Naive thymus-derived CD4-positive, alpha-beta T cell (primary cell): ENCODE measurements at regions of chr3 and their contacts with region 1.

Region 1: GRCh38 chr3:177944228-177944661 is 592.0 kb upstream of the KCNMB2 start:
- DNase-seq: peak in 7 of 9 donors; percentile 43 to 76 (median 69)
- ATAC-seq: peak; percentile 81
- H3K4me3 ChIP-seq: no peak overlapping the region
- H3K4me3 Mint-ChIP-seq: peak overlapping the region; percentile 3 to 83 (median 58)
- H3K27ac ChIP-seq: peak overlapping the region; percentile 55
- H3K27ac Mint-ChIP-seq: peak overlapping the region; percentile 4 to 92 (median 86)
- H3K4me1 ChIP-seq: peaks cover 19 to 29% of the 10 kb centered on the region in 2 donors
- H3K4me1 Mint-ChIP-seq: peaks cover 20 to 47% (median 38%) of the 10 kb centered on the region in 7 donors
- H3K27me3 ChIP-seq: no peaks in the 10 kb centered on the region
- H3K27me3 Mint-ChIP-seq: no peaks in the 10 kb centered on the region

Region 2: GRCh38 chr3:178001670-178002101 is 57.4 kb after region 1 on chr3:
- CTCF ChIA-PET with region 1: no interaction called
- POLR2A ChIA-PET with region 1: interaction called, 3 read pairs
- intact Hi-C with region 1: loop called in 1 of 2 experiments (anchors 5 kb)
- DNase-seq: peak in 7 of 9 donors; percentile 19 to 51 (median 41)
- ATAC-seq: peak; percentile 79
- H3K4me3 ChIP-seq: peak overlapping the region; percentile 0
- H3K4me3 Mint-ChIP-seq: peak overlapping the region; percentile 58 to 83 (median 72)
- H3K27ac ChIP-seq: peak overlapping the region; percentile 55
- H3K27ac Mint-ChIP-seq: peak overlapping the region; percentile 81 to 95 (median 84)
- H3K4me1 ChIP-seq: peaks cover 12 to 43% of the 10 kb centered on the region in 2 donors
- H3K4me1 Mint-ChIP-seq: peaks cover 45 to 69% (median 66%) of the 10 kb centered on the region in 7 donors
- H3K27me3 ChIP-seq: no peaks in the 10 kb centered on the region
- H3K27me3 Mint-ChIP-seq: no peaks in the 10 kb centered on the region

Region 3: DNA sequence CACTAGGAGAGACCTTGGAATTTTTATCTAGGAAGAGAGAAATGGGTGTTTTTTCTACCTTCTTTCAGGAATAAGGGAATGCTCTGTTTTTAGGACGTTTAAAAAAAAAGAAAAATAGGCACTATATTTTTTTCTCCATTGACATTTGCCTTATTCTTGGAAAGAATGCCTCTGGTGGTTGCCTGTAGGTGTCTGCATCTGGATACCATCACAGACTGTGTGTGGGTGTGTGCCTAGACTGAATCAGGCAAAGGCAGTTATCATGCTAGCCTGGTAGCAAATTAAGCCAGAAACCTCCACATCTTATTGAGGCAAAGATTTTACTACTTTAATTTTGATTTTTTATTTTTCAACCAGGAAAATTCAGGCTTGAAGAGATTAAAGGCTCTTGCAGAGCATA is 78.4 kb after region 1 on chr3:
- CTCF ChIA-PET with region 1: no interaction called
- POLR2A ChIA-PET with region 1: no interaction called
- intact Hi-C with region 1: loop called in 1 of 2 experiments (anchors 5 kb)
- DNase-seq: no peak
- ATAC-seq: no peak
- H3K4me3 ChIP-seq: no peak overlapping the region
- H3K4me3 Mint-ChIP-seq: no peak overlapping the region
- H3K27ac ChIP-seq: no peak overlapping the region
- H3K27ac Mint-ChIP-seq: peak overlapping the region in 1 of 9 donors; percentile 60
- H3K4me1 ChIP-seq: no peaks in the 10 kb centered on the region
- H3K4me1 Mint-ChIP-seq: peaks cover 0 to 4% (median 0%) of the 10 kb centered on the region in 7 donors
- H3K27me3 ChIP-seq: no peaks in the 10 kb centered on the region
- H3K27me3 Mint-ChIP-seq: no peaks in the 10 kb centered on the region

Region 4: GRCh38 chr3:178169421-178169820 is 225.2 kb after region 1 on chr3:
- CTCF ChIA-PET with region 1: no interaction called
- POLR2A ChIA-PET with region 1: no interaction called
- intact Hi-C with region 1: no loop called
- DNase-seq: no peak
- ATAC-seq: no peak
- H3K4me3 ChIP-seq: no peak overlapping the region
- H3K4me3 Mint-ChIP-seq: no peak overlapping the region
- H3K27ac ChIP-seq: no peak overlapping the region
- H3K27ac Mint-ChIP-seq: no peak overlapping the region
- H3K4me1 ChIP-seq: no peaks in the 10 kb centered on the region
- H3K4me1 Mint-ChIP-seq: no peaks in the 10 kb centered on the region
- H3K27me3 ChIP-seq: no peaks in the 10 kb centered on the region
- H3K27me3 Mint-ChIP-seq: no peaks in the 10 kb centered on the region